ENCODE measurements at regions of chr1 and their contacts with region 1.

Region 1: GRCh38 chr1:172719694-172720138 is 60.8 kb downstream of the FASLG start:
- DNase-seq: peak in 3 of 14 experiments; percentile 70 to 78 (median 75)
- ATAC-seq: peak; percentile 86
- H3K4me3 ChIP-seq: no peak overlapping the region
- H3K4me3 Mint-ChIP-seq: no peak overlapping the region
- H3K27ac ChIP-seq: no peak overlapping the region
- H3K27ac Mint-ChIP-seq: no peak overlapping the region
- H3K4me1 ChIP-seq: peaks cover 10% of the 10 kb centered on the region
- H3K4me1 Mint-ChIP-seq: peaks cover 35% of the 10 kb centered on the region
- H3K27me3 ChIP-seq: no peaks in the 10 kb centered on the region
- H3K27me3 Mint-ChIP-seq: no peaks in the 10 kb centered on the region
- CTCF ChIP-seq: peak; percentile 99

Region 2: GRCh38 chr1:172109359-172109758 is 610.4 kb before region 1 on chr1:
- CTCF ChIA-PET with region 1: no interaction called
- POLR2A ChIA-PET with region 1: no interaction called
- intact Hi-C with region 1: loop called in 1 of 2 experiments (anchors 10 kb)
- DNase-seq: no peak
- ATAC-seq: no peak
- H3K4me3 ChIP-seq: no peak overlapping the region
- H3K4me3 Mint-ChIP-seq: no peak overlapping the region
- H3K27ac ChIP-seq: no peak overlapping the region
- H3K27ac Mint-ChIP-seq: no peak overlapping the region
- H3K4me1 ChIP-seq: no peaks in the 10 kb centered on the region
- H3K4me1 Mint-ChIP-seq: no peaks in the 10 kb centered on the region
- H3K27me3 ChIP-seq: no peaks in the 10 kb centered on the region
- H3K27me3 Mint-ChIP-seq: no peaks in the 10 kb centered on the region
- CTCF ChIP-seq: no peak

Region 3: GRCh38 chr1:172449585-172450534 is 269.9 kb before region 1 on chr1:
- CTCF ChIA-PET with region 1: no interaction called
- POLR2A ChIA-PET with region 1: no interaction called
- intact Hi-C with region 1: loop called in 1 of 2 experiments (anchors 2 kb)
- DNase-seq: peak in 6 of 14 experiments; percentile 4 to 69 (median 47)
- ATAC-seq: peak; percentile 96
- H3K4me3 ChIP-seq: no peak overlapping the region
- H3K4me3 Mint-ChIP-seq: no peak overlapping the region
- H3K27ac ChIP-seq: no peak overlapping the region
- H3K27ac Mint-ChIP-seq: no peak overlapping the region
- H3K4me1 ChIP-seq: peaks cover 18% of the 10 kb centered on the region
- H3K4me1 Mint-ChIP-seq: peaks cover 17% of the 10 kb centered on the region
- H3K27me3 ChIP-seq: no peaks in the 10 kb centered on the region
- H3K27me3 Mint-ChIP-seq: no peaks in the 10 kb centered on the region
- CTCF ChIP-seq: peak; percentile 77

Region 4: DNA sequence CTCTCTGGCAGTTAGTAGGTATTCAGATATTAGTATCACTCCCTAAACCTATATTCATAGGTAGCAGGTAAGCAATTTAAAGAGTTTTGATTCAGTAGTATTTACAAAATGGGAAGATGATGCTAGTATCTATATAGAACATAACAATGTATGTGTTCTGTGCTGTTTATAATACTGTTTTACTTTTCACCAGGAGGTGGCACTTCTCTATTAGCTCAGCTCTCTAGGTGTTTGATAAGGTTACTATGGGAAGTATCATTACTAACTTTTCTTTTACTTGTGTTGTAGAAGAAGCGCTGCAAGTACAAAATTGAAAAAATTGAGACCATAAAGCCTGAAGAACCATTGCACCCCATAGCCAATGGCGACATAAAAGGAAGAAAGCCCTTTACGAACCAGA is 110.2 kb before region 1 on chr1:
- CTCF ChIA-PET with region 1: interaction called, 49 read pairs
- POLR2A ChIA-PET with region 1: interaction called, 8 read pairs
- intact Hi-C with region 1: loop called (anchors 1 kb)
- DNase-seq: peak in 3 of 14 experiments; percentile 56 to 63 (median 58)
- ATAC-seq: peak; percentile 84
- H3K4me3 ChIP-seq: no peak overlapping the region
- H3K4me3 Mint-ChIP-seq: no peak overlapping the region
- H3K27ac ChIP-seq: no peak overlapping the region
- H3K27ac Mint-ChIP-seq: no peak overlapping the region
- H3K4me1 ChIP-seq: no peaks in the 10 kb centered on the region
- H3K4me1 Mint-ChIP-seq: peaks cover 6% of the 10 kb centered on the region
- H3K27me3 ChIP-seq: no peaks in the 10 kb centered on the region
- H3K27me3 Mint-ChIP-seq: no peaks in the 10 kb centered on the region
- CTCF ChIP-seq: peak; percentile 84

Region 5: DNA sequence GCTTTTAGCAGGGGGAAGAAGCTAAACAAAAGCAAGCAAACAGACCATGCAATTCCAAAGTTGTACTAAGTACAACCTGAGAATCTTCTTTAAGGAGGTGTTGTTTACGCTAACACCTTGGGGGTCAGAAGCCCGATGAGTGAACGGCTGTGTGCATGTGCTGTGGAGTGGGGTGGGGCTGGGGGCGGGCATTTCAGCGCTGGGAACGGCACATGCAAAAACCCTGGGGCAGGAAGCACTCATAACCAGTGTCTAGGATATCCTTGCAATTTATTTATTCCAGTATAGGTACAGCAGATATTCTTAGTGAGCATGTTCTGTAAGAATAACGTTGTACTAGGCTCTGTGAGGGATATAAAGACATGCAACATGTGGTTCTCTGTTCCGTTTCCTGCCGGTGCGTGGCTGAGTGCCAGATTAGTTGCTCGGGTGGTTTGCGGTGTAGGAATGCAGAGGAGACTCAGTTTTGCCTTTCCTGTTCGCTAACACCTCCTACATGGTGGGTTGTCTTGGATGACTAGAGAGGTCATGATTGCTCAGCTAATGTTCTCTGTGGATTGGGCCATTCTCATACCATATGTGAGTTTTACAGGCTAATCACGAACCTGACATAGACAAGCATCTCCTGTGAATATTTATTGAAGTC is 57.1 kb before region 1 on chr1:
- CTCF ChIA-PET with region 1: interaction called, 7 read pairs
- POLR2A ChIA-PET with region 1: interaction called, 7 read pairs
- intact Hi-C with region 1: loop called (anchors 2 to 5 kb)
- DNase-seq: peak; percentile 61 to 91 (median 80)
- ATAC-seq: peak; percentile 84
- H3K4me3 ChIP-seq: peak overlapping the region; percentile 60
- H3K4me3 Mint-ChIP-seq: peak overlapping the region; percentile 43
- H3K27ac ChIP-seq: peak overlapping the region in 1 of 2 donors; percentile 26
- H3K27ac Mint-ChIP-seq: peak overlapping the region; percentile 36
- H3K4me1 ChIP-seq: peaks cover 49% of the 10 kb centered on the region
- H3K4me1 Mint-ChIP-seq: peaks cover 64% of the 10 kb centered on the region
- H3K27me3 ChIP-seq: no peaks in the 10 kb centered on the region
- H3K27me3 Mint-ChIP-seq: no peaks in the 10 kb centered on the region
- CTCF ChIP-seq: no peak

Region 6: DNA sequence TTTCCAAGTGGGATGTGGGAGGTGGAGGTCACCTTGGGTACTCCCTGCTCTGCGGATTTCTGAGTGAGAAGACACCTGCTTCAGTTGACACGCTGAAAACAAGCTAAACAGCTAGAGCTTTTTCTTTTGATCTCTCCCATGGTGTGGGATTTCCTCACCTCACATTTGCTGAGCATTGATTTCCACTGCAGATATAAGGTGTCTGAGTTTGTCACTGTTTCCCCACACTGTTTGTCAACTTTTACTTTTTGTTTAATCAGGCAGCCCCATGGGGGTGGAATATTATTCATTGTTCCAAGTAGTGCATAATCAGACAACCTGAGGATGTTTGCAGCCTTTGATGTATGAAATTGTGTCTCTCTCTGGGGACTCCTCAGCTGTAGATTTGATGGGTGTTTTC is 11.3 kb before region 1 on chr1:
- CTCF ChIA-PET with region 1: interaction called, 12 read pairs
- POLR2A ChIA-PET with region 1: interaction called, 5 read pairs
- intact Hi-C with region 1: loop called in 1 of 2 experiments (anchors 2 kb)
- DNase-seq: peak in 7 of 14 experiments; percentile 4 to 72 (median 49)
- ATAC-seq: peak; percentile 86
- H3K4me3 ChIP-seq: peak overlapping the region; percentile 6
- H3K4me3 Mint-ChIP-seq: peak overlapping the region; percentile 26
- H3K27ac ChIP-seq: no peak overlapping the region
- H3K27ac Mint-ChIP-seq: peak overlapping the region; percentile 50
- H3K4me1 ChIP-seq: peaks cover 34% of the 10 kb centered on the region
- H3K4me1 Mint-ChIP-seq: peaks cover 25% of the 10 kb centered on the region
- H3K27me3 ChIP-seq: no peaks in the 10 kb centered on the region
- H3K27me3 Mint-ChIP-seq: no peaks in the 10 kb centered on the region
- CTCF ChIP-seq: no peak

Region 7: GRCh38 chr1:172738389-172738788 is 18.7 kb after region 1 on chr1:
- CTCF ChIA-PET with region 1: no interaction called
- POLR2A ChIA-PET with region 1: no interaction called
- intact Hi-C with region 1: no loop called
- DNase-seq: no peak
- ATAC-seq: no peak
- H3K4me3 ChIP-seq: no peak overlapping the region
- H3K4me3 Mint-ChIP-seq: no peak overlapping the region
- H3K27ac ChIP-seq: no peak overlapping the region
- H3K27ac Mint-ChIP-seq: no peak overlapping the region
- H3K4me1 ChIP-seq: no peaks in the 10 kb centered on the region
- H3K4me1 Mint-ChIP-seq: peaks cover 5% of the 10 kb centered on the region
- H3K27me3 ChIP-seq: no peaks in the 10 kb centered on the region
- H3K27me3 Mint-ChIP-seq: no peaks in the 10 kb centered on the region
- CTCF ChIP-seq: no peak

Region 8: GRCh38 chr1:172781513-172782140 is 61.9 kb after region 1 on chr1:
- CTCF ChIA-PET with region 1: no interaction called
- POLR2A ChIA-PET with region 1: no interaction called
- intact Hi-C with region 1: no loop called
- DNase-seq: no peak
- ATAC-seq: no peak
- H3K4me3 ChIP-seq: no peak overlapping the region
- H3K4me3 Mint-ChIP-seq: no peak overlapping the region
- H3K27ac ChIP-seq: no peak overlapping the region
- H3K27ac Mint-ChIP-seq: no peak overlapping the region
- H3K4me1 ChIP-seq: no peaks in the 10 kb centered on the region
- H3K4me1 Mint-ChIP-seq: peaks cover 16% of the 10 kb centered on the region
- H3K27me3 ChIP-seq: no peaks in the 10 kb centered on the region
- H3K27me3 Mint-ChIP-seq: no peaks in the 10 kb centered on the region
- CTCF ChIP-seq: no peak

Region 9: GRCh38 chr1:174469687-174470086 is 1750.0 kb after region 1 on chr1:
- CTCF ChIA-PET with region 1: no interaction called
- POLR2A ChIA-PET with region 1: no interaction called
- intact Hi-C with region 1: no loop called
- DNase-seq: no peak
- ATAC-seq: no peak
- H3K4me3 ChIP-seq: no peak overlapping the region
- H3K4me3 Mint-ChIP-seq: no peak overlapping the region
- H3K27ac ChIP-seq: no peak overlapping the region
- H3K27ac Mint-ChIP-seq: no peak overlapping the region
- H3K4me1 ChIP-seq: no peaks in the 10 kb centered on the region
- H3K4me1 Mint-ChIP-seq: no peaks in the 10 kb centered on the region
- H3K27me3 ChIP-seq: no peaks in the 10 kb centered on the region
- H3K27me3 Mint-ChIP-seq: no peaks in the 10 kb centered on the region
- CTCF ChIP-seq: no peak